ENCODE measurements at regions of chr6 and their contacts with region 1.

Region 1: GRCh38 chr6:144637541-144637940 is 352.4 kb downstream of the UTRN start:
- DNase-seq: no peak
- H3K4me3 ChIP-seq: no peak overlapping the region
- H3K27me3 ChIP-seq: no peaks in the 10 kb centered on the region
- CTCF ChIP-seq: no peak

Region 2: DNA sequence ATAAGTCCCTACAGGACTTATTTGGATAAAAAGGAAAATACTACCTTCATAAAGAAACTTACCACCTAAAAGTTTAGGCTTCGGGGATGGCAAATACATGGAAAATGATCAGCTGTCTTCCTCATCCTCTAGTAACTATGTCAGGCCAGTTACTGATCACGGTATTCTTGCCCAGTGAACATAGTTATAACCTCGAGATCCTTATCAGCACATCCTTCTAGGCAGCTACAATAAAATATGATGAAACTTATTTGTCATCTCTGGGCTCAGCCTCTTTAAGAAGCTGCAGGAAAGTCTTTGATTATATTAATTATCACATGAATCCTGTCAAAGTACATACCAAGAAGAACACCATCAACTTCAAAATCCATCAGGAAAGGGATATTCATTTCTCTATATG is 583.9 kb before region 1 on chr6:
- CTCF ChIA-PET with region 1: no interaction called
- POLR2A ChIA-PET with region 1: no interaction called
- DNase-seq: no peak
- H3K4me3 ChIP-seq: no peak overlapping the region
- H3K27me3 ChIP-seq: peaks cover 1% of the 10 kb centered on the region; the same call in 1 of the 2 replicates
- CTCF ChIP-seq: no peak

Region 3: GRCh38 chr6:144415014-144415413 is 222.5 kb before region 1 on chr6:
- CTCF ChIA-PET with region 1: no interaction called
- POLR2A ChIA-PET with region 1: no interaction called
- DNase-seq: no peak
- H3K4me3 ChIP-seq: no peak overlapping the region
- H3K27me3 ChIP-seq: no peaks in the 10 kb centered on the region
- CTCF ChIP-seq: no peak

Region 4: DNA sequence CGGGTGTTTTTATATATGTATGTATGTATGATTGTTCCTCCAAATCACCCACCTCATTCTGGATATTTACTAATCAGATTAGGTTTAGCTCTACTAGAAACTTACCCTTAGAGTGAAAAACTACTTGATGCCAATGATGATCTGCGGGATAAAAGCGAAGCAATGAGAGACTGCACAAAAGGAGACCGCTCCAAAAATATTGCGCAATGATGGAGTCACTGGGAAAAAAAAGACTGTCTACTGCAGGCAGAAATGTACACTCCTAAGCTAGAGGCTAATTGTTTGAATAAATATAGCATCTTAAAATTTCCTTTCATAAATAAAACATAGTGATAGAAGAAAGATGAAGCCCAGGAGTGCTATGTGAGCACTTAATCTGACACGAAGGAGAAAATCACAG is 1913.4 kb after region 1 on chr6:
- CTCF ChIA-PET with region 1: no interaction called
- POLR2A ChIA-PET with region 1: interaction called, 12 read pairs
- DNase-seq: no peak
- H3K4me3 ChIP-seq: no peak overlapping the region
- H3K27me3 ChIP-seq: no peaks in the 10 kb centered on the region
- CTCF ChIP-seq: no peak